K562 (cell line): ENCODE measurements at regions of chr10 and their contacts with region 1.

Region 1: DNA sequence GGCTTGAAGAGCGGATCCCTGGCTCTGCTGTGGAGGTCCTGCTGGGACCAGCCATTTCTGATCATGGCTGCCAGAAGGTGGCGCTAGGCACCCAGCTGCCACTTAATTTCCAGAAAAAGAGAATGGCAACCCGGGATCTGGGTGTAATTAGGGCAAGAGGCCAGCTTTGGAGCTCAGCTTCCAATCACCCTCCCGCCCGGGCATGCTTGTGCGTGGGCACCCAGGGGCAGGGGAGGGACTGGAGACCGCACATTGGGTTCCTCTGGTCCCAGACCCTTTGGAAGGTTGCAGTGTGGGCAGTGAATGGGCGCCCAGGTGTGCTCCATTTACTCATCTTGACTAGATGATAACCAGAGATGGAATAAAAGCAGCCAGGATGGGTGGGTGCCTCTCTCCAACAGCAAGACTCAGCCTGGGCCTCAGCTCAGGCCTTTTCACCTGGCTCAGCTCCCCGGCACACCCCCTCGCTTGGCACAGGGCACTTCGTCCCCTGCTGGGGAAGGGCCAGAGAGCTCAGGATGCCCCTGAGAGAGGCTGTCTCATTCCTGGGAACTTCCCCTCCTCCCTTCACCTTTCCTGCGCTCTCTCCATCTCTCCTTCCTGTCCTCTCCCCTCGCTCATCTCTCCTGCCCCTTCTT is 14.7 kb downstream of the FAM241B start:
- DNase-seq: peak; percentile 69 to 81 (median 81)
- ATAC-seq: peak; percentile 87
- H3K4me3 ChIP-seq: no peak overlapping the region
- H3K27ac ChIP-seq: no peak overlapping the region
- H3K4me1 ChIP-seq: no peaks in the 10 kb centered on the region
- H3K27me3 ChIP-seq: peaks cover 0 to 71% of the 10 kb centered on the region in 2 experiments; a peak in 3 of 5 replicates
- CTCF ChIP-seq: peak; percentile 88 to 94 (median 92)
- EP300 ChIP-seq: no peak
- POLR2A ChIP-seq: no peak
- RAD21 ChIP-seq: peak; percentile 79 to 87

Region 2: GRCh38 chr10:69515699-69516259 is 129.0 kb before region 1 on chr10:
- CTCF ChIA-PET with region 1: interaction called, 80 read pairs
- POLR2A ChIA-PET with region 1: no interaction called
- in situ Hi-C with region 1: loop called (anchors 5 kb)
- intact Hi-C with region 1: loop called (anchors 1 kb)
- DNase-seq: peak; percentile 82 to 87 (median 86)
- ATAC-seq: peak; percentile 99
- H3K4me3 ChIP-seq: no peak overlapping the region
- H3K27ac ChIP-seq: no peak overlapping the region
- H3K4me1 ChIP-seq: no peaks in the 10 kb centered on the region
- H3K27me3 ChIP-seq: peaks cover 0 to 28% of the 10 kb centered on the region in 2 experiments; a peak in 4 of 5 replicates
- CTCF ChIP-seq: peak; percentile 94 to 97 (median 95)
- EP300 ChIP-seq: no peak
- POLR2A ChIP-seq: no peak
- RAD21 ChIP-seq: peak; percentile 88 to 96

Region 3: GRCh38 chr10:69657430-69657829 is 12.7 kb after region 1 on chr10:
- CTCF ChIA-PET with region 1: no interaction called
- POLR2A ChIA-PET with region 1: no interaction called
- in situ Hi-C with region 1: no loop called
- intact Hi-C with region 1: no loop called
- DNase-seq: no peak
- ATAC-seq: peak; percentile 29; the same call in 2 of the 3 replicates
- H3K4me3 ChIP-seq: no peak overlapping the region
- H3K27ac ChIP-seq: no peak overlapping the region
- H3K4me1 ChIP-seq: no peaks in the 10 kb centered on the region
- H3K27me3 ChIP-seq: peaks cover 25 to 74% of the 10 kb centered on the region in 2 experiments; a peak in 4 of 5 replicates
- CTCF ChIP-seq: no peak
- EP300 ChIP-seq: no peak
- POLR2A ChIP-seq: no peak
- RAD21 ChIP-seq: no peak

Region 4: GRCh38 chr10:69716711-69717560 is 72.2 kb after region 1 on chr10:
- CTCF ChIA-PET with region 1: interaction called, 21 read pairs
- POLR2A ChIA-PET with region 1: no interaction called
- in situ Hi-C with region 1: no loop called
- intact Hi-C with region 1: loop called (anchors 1 kb)
- DNase-seq: peak; percentile 72 to 82 (median 76)
- ATAC-seq: peak; percentile 95
- H3K4me3 ChIP-seq: no peak overlapping the region
- H3K27ac ChIP-seq: no peak overlapping the region
- H3K4me1 ChIP-seq: no peaks in the 10 kb centered on the region
- H3K27me3 ChIP-seq: peaks cover 3 to 36% of the 10 kb centered on the region in 2 experiments
- CTCF ChIP-seq: peak; percentile 86 to 91 (median 90)
- EP300 ChIP-seq: no peak
- POLR2A ChIP-seq: no peak
- RAD21 ChIP-seq: peak; percentile 68 to 85

Region 5: GRCh38 chr10:69800109-69800508 is 155.3 kb after region 1 on chr10:
- CTCF ChIA-PET with region 1: interaction called, 14 read pairs
- POLR2A ChIA-PET with region 1: no interaction called
- in situ Hi-C with region 1: no loop called
- intact Hi-C with region 1: loop called (anchors 5 kb)
- DNase-seq: peak; percentile 48 to 69 (median 61)
- ATAC-seq: peak; percentile 87
- H3K4me3 ChIP-seq: no peak overlapping the region
- H3K27ac ChIP-seq: no peak overlapping the region
- H3K4me1 ChIP-seq: peaks cover 0 to 13% of the 10 kb centered on the region in 2 experiments; a peak in 1 of 5 replicates
- H3K27me3 ChIP-seq: peaks cover 17 to 59% of the 10 kb centered on the region in 2 experiments; a peak in 4 of 5 replicates
- CTCF ChIP-seq: peak; percentile 63 to 79 (median 75)
- EP300 ChIP-seq: no peak
- POLR2A ChIP-seq: no peak
- RAD21 ChIP-seq: peak; percentile 57 to 67